Activated CD4-positive, alpha-beta memory T cell treated with anti-CD3 and anti-CD28 coated beads, Interleukin-2, amount 10 ng/mL, durations not matched to agents 7 days and 5 days (primary cell): ENCODE measurements at regions of chr17 and their contacts with region 1.

Region 1: DNA sequence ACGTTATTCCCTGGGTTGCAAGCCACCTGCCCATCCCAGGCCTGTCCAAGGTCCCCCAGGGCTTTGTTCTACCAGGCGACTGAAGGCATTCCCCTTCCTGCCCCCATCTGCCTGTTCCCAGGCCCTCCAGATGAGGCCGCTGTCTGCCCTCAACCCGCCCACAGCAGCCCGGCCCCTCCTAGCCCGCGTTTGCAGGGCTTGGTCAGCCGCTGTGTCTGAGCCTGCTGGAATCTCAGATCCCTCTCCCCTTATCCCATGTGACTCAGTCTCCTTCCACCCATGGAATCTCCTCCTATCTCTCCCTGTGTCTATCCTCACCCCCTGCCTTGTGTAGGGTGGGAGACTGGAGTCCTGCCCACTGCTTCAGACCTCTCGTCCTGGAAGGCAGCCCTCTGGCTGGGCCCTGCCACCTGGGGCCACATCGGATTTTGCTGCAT is 186.0 kb upstream of the TNRC6C start:
- DNase-seq: peak; percentile 70
- H3K4me3 Mint-ChIP-seq: no peak overlapping the region
- H3K27ac Mint-ChIP-seq: no peak overlapping the region
- H3K4me1 Mint-ChIP-seq: peaks cover 8% of the 10 kb centered on the region
- H3K27me3 Mint-ChIP-seq: peaks cover 6% of the 10 kb centered on the region

Region 2: GRCh38 chr17:77542551-77543490 is 229.7 kb before region 1 on chr17:
- CTCF ChIA-PET with region 1: interaction called, 14 read pairs
- POLR2A ChIA-PET with region 1: no interaction called
- DNase-seq: peak; percentile 71
- H3K4me3 Mint-ChIP-seq: no peak overlapping the region
- H3K27ac Mint-ChIP-seq: no peak overlapping the region
- H3K4me1 Mint-ChIP-seq: peaks cover 4% of the 10 kb centered on the region
- H3K27me3 Mint-ChIP-seq: peaks cover 27% of the 10 kb centered on the region